ENCODE measurements at regions of chr19 and their contacts with region 1.

Region 1: GRCh38 chr19:46529622-46530462 is 34.2 kb upstream of the PNMA8B start:
- DNase-seq: peak; percentile 82
- H3K4me3 Mint-ChIP-seq: no peak overlapping the region
- H3K27ac Mint-ChIP-seq: peak overlapping the region; percentile 42
- H3K4me1 Mint-ChIP-seq: peaks cover 14% of the 10 kb centered on the region
- H3K27me3 Mint-ChIP-seq: peaks cover 2% of the 10 kb centered on the region

Region 2: DNA sequence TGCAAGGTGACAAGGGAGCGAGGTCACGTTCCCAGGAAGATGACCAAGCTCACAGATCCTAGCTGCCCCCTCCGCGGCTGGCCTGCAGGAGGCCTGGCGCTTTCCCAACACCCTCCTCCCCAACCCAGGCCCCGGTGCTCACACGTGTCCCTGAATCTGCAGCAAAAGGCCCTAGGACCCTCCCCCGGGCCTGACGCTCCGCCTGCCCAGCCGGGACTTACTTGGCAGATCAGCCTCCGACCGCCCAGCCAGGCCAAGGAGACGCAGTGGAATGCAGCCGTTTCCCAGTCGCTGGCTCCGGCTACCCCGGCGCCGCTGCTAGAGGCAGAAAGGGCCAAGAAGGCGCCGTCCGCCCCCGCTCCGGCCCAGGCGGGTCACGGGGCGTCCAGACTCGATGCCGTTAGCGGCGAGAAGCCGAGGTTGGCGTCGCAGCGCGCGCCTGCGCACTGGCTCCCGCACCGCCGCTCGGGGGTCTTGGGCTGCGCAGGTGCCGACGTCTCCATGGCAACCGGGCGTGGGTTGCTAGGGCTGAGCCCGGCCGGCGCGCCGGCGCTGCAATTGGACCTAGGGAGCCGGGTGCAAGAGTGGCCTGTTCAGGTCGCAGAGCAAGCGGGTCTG is 58.6 kb before region 1 on chr19 and contains the start of gene PNMA8A:
- CTCF ChIA-PET with region 1: no interaction called
- POLR2A ChIA-PET with region 1: no interaction called
- intact Hi-C with region 1: no loop called
- DNase-seq: no peak
- H3K4me3 Mint-ChIP-seq: no peak within 1 kb of the TSS
- H3K27ac Mint-ChIP-seq: no peak within 1 kb of the TSS
- H3K4me1 Mint-ChIP-seq: peaks cover 22% of the 10 kb centered on the region
- H3K27me3 Mint-ChIP-seq: peaks cover 68% of the 10 kb centered on the region
- total RNA-seq, gene PNMA8A: 0.17 to 0.44 TPM

Region 3: GRCh38 chr19:46542428-46543230 is 12.8 kb after region 1 on chr19:
- CTCF ChIA-PET with region 1: interaction called, 115 read pairs
- POLR2A ChIA-PET with region 1: no interaction called
- intact Hi-C with region 1: loop called (anchors 1 kb)
- DNase-seq: peak; percentile 84
- H3K4me3 Mint-ChIP-seq: no peak overlapping the region
- H3K27ac Mint-ChIP-seq: no peak overlapping the region
- H3K4me1 Mint-ChIP-seq: peaks cover 2% of the 10 kb centered on the region
- H3K27me3 Mint-ChIP-seq: no peaks in the 10 kb centered on the region

Region 4: DNA sequence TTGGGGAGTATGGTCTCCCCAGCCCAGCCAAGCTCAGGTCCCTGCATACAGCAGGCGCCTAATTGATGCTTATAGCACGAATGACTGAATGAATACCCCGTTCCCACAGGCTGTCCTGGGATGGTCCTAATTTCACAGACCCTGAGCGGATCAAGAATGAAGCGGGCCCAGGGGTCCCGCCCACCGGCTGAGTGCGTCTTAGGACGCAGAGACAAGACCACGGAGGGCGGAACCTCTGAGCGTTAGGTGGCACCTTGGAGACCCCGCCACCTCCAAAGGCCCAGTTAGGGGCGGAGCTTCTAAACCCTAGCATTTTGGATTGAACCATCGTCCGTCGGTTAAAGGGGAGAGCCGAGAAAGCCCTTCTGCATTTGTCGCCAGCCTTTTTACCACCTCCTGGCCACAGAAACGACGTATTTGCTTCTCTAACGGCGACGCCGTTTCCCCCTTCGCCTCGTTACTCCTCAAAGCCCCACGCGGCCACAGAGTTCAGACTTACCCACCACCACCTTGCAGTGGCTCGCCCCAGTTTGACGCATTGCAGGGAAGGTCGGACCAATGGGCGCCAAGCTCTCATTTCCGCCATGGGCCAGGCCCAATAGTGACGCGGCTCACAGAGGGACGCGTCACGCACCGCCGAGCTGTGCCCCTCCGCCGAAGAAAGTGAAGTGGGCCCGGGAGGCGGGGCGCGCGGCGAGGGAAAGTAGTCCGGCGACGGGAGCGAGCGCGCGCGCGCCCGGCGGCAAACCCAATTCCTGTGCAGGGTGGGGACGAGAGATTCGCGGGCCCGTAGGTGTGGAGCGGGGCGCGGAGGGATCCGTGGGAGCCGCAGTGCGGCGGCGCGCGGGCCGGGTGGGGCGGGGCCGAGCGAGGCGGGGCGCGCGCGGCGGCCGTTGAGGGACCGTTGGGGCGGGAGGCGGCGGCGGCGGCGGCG is 70.8 kb after region 1 on chr19:
- CTCF ChIA-PET with region 1: interaction called, 10 read pairs
- POLR2A ChIA-PET with region 1: no interaction called
- intact Hi-C with region 1: loop called (anchors 5 kb)
- DNase-seq: peak; percentile 97
- H3K4me3 Mint-ChIP-seq: peak overlapping the region; percentile 95
- H3K27ac Mint-ChIP-seq: peak overlapping the region; percentile 100
- H3K4me1 Mint-ChIP-seq: peaks cover 26% of the 10 kb centered on the region
- H3K27me3 Mint-ChIP-seq: no peaks in the 10 kb centered on the region

Region 5: GRCh38 chr19:46746281-46747013 is 216.6 kb after region 1 on chr19 and contains the start of gene STRN4:
- CTCF ChIA-PET with region 1: interaction called, 6 read pairs
- POLR2A ChIA-PET with region 1: no interaction called
- intact Hi-C with region 1: loop called (anchors 10 kb)
- DNase-seq: peak; percentile 66
- H3K4me3 Mint-ChIP-seq: peak within 1 kb of the TSS; percentile 94
- H3K27ac Mint-ChIP-seq: peak within 1 kb of the TSS; percentile 83
- H3K4me1 Mint-ChIP-seq: peaks cover 49% of the 10 kb centered on the region
- H3K27me3 Mint-ChIP-seq: no peaks in the 10 kb centered on the region
- total RNA-seq, gene STRN4: 52.6 to 59.3 TPM

Region 6: DNA sequence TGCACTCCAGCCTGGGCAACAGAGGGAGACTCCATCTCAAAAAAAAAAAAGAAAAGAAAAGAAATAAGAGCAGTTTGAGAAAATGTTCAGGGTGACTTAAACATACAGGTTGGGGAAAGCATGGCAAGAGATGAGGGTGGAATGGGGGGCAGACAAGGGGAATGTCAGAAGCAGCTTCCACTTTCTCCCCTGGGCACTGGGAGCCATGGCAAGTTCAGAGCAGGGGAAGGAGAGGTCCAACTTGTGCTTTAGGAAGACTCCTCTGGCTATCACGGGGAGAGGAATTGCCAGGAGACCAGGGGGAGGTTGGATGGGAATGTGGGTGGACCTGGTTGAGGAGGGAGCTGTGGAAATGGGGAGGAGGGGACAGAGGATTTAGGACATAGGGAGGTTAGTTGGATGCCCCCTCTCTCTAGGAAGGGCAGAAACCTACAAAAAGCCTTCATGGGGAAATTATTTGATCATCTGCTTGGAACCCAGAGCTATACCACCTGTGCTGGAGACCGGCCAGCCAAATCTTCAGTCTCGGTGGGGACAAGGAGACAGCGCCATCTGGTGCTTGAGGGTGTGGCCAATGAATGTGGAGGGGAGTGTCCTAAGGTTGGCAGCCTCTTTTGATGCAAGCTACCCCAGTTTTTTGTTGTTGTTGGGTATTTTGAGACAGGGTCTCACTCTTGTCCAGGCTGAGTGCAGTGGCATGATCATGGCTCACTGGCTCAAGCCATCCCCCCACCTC is 223.7 kb after region 1 on chr19:
- CTCF ChIA-PET with region 1: interaction called, 11 read pairs
- POLR2A ChIA-PET with region 1: no interaction called
- intact Hi-C with region 1: loop called (anchors 10 kb)
- DNase-seq: peak; percentile 83
- H3K4me3 Mint-ChIP-seq: no peak overlapping the region
- H3K27ac Mint-ChIP-seq: no peak overlapping the region
- H3K4me1 Mint-ChIP-seq: peaks cover under 1% of the 10 kb centered on the region
- H3K27me3 Mint-ChIP-seq: no peaks in the 10 kb centered on the region

Measured in activated CD4-positive, alpha-beta memory T cell treated with anti-CD3 and anti-CD28 coated beads for 36 hours (primary cell).